ENCODE measurements at regions of chr2 and their contacts with region 1.

Region 1: GRCh38 chr2:201231781-201232466 is 28.4 kb upstream of the CASP8 start:
- DNase-seq: peak; percentile 97
- H3K4me3 Mint-ChIP-seq: peak overlapping the region; percentile 92
- H3K27ac Mint-ChIP-seq: peak overlapping the region; percentile 90
- H3K4me1 Mint-ChIP-seq: peaks cover 55% of the 10 kb centered on the region
- H3K27me3 Mint-ChIP-seq: no peaks in the 10 kb centered on the region

Region 2: GRCh38 chr2:201118121-201118960 is 113.6 kb before region 1 on chr2:
- CTCF ChIA-PET with region 1: interaction called, 18 read pairs
- POLR2A ChIA-PET with region 1: interaction called, 3 read pairs
- DNase-seq: peak; percentile 90
- H3K4me3 Mint-ChIP-seq: peak overlapping the region; percentile 91
- H3K27ac Mint-ChIP-seq: peak overlapping the region; percentile 97
- H3K4me1 Mint-ChIP-seq: peaks cover 64% of the 10 kb centered on the region
- H3K27me3 Mint-ChIP-seq: no peaks in the 10 kb centered on the region

Region 3: GRCh38 chr2:201208563-201209252 is 23.2 kb before region 1 on chr2:
- CTCF ChIA-PET with region 1: interaction called, 32 read pairs
- POLR2A ChIA-PET with region 1: no interaction called
- DNase-seq: no peak
- H3K4me3 Mint-ChIP-seq: no peak overlapping the region
- H3K27ac Mint-ChIP-seq: peak overlapping the region; percentile 41
- H3K4me1 Mint-ChIP-seq: peaks cover 38% of the 10 kb centered on the region
- H3K27me3 Mint-ChIP-seq: no peaks in the 10 kb centered on the region

Region 4: GRCh38 chr2:201260302-201260800 is 28.4 kb after region 1 on chr2 and contains the start of gene CASP8:
- CTCF ChIA-PET with region 1: interaction called, 39 read pairs
- POLR2A ChIA-PET with region 1: interaction called, 40 read pairs
- DNase-seq: peak; percentile 78
- H3K4me3 Mint-ChIP-seq: peak within 1 kb of the TSS; percentile 95
- H3K27ac Mint-ChIP-seq: peak within 1 kb of the TSS; percentile 96
- H3K4me1 Mint-ChIP-seq: peaks cover 67% of the 10 kb centered on the region
- H3K27me3 Mint-ChIP-seq: no peaks in the 10 kb centered on the region
- total RNA-seq, gene CASP8: 73.6 to 77.7 TPM

Region 5: DNA sequence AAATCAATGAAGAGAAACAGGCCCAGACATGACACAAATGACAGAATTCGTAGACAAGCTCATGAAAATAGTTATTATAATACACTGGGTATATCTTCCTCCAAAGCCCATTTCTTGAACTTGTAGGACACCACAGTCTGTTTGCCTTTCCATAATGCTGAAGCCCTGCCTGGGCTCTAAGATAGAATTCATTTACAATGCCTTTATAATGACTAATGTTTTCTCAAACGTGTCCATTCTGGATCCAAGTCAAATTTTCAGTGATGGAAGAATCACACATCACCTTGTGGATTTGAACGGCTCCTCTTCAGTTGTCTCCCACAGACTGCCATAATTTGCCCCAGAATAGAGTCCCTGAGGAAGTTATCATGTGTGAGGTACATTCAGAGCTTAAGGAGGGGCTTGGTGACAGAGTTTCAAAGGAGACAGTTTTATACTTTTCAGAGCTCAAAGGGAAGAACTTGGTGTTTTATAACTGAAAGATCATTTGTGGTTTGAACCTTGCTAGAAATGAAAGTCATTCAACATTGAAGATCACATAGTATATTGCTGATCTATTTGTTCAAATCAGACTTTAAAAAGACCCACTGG is 66.6 kb after region 1 on chr2:
- CTCF ChIA-PET with region 1: no interaction called
- POLR2A ChIA-PET with region 1: no interaction called
- DNase-seq: no peak
- H3K4me3 Mint-ChIP-seq: no peak overlapping the region
- H3K27ac Mint-ChIP-seq: peak overlapping the region; percentile 31
- H3K4me1 Mint-ChIP-seq: peaks cover 7% of the 10 kb centered on the region
- H3K27me3 Mint-ChIP-seq: no peaks in the 10 kb centered on the region

Region 6: GRCh38 chr2:201320701-201321100 is 88.8 kb after region 1 on chr2:
- CTCF ChIA-PET with region 1: no interaction called
- POLR2A ChIA-PET with region 1: no interaction called
- DNase-seq: no peak
- H3K4me3 Mint-ChIP-seq: no peak overlapping the region
- H3K27ac Mint-ChIP-seq: no peak overlapping the region
- H3K4me1 Mint-ChIP-seq: no peaks in the 10 kb centered on the region
- H3K27me3 Mint-ChIP-seq: no peaks in the 10 kb centered on the region

Region 7: GRCh38 chr2:201444746-201445465 is 213.0 kb after region 1 on chr2:
- CTCF ChIA-PET with region 1: interaction called, 10 read pairs
- POLR2A ChIA-PET with region 1: interaction called, 3 read pairs
- DNase-seq: no peak
- H3K4me3 Mint-ChIP-seq: no peak overlapping the region
- H3K27ac Mint-ChIP-seq: no peak overlapping the region
- H3K4me1 Mint-ChIP-seq: peaks cover 55% of the 10 kb centered on the region
- H3K27me3 Mint-ChIP-seq: no peaks in the 10 kb centered on the region

Measured in activated CD4-positive, alpha-beta T cell treated with anti-CD3 and anti-CD28 coated beads, Interleukin-2, amount 10 ng/mL, durations not matched to agents 7 days and 5 days (primary cell).